ENCODE measurements at regions of chrX and their contacts with region 1.

Region 1: DNA sequence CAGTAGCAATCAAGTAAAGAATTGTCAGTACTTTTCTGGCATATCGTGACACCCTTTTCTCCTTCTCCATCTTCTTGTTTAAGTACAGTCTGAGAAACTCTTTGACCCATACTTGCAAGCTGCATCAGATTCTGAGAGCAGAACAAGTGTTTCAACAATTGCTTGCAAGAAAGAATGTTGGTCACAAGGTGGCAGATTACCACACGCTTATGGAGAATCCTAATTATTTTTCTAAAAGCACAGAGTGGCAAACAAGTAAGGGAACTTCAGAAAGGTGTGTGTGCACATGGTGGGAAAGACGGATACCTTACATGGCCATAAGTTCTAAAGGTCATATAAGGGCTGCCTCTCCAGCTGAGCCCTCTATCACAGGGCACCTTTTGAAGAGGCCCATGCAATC is 136.4 kb upstream of the FGF13 start:
- DNase-seq: peak; percentile 9
- H3K4me3 ChIP-seq: no peak overlapping the region
- H3K27ac ChIP-seq: no peak overlapping the region
- H3K4me1 ChIP-seq: no peaks in the 10 kb centered on the region
- H3K27me3 ChIP-seq: no peaks in the 10 kb centered on the region
- CTCF ChIP-seq: peak; percentile 17 to 49

Region 2: GRCh38 chrX:138886769-138887168 is 38.8 kb after region 1 on chrX:
- CTCF ChIA-PET with region 1: no interaction called
- dilution Hi-C with region 1: no loop called
- in situ Hi-C with region 1: no loop called
- intact Hi-C with region 1: no loop called
- DNase-seq: peak; percentile 73
- H3K4me3 ChIP-seq: no peak overlapping the region
- H3K27ac ChIP-seq: no peak overlapping the region
- H3K4me1 ChIP-seq: peaks cover 3% of the 10 kb centered on the region
- H3K27me3 ChIP-seq: no peaks in the 10 kb centered on the region
- CTCF ChIP-seq: no peak

Region 3: DNA sequence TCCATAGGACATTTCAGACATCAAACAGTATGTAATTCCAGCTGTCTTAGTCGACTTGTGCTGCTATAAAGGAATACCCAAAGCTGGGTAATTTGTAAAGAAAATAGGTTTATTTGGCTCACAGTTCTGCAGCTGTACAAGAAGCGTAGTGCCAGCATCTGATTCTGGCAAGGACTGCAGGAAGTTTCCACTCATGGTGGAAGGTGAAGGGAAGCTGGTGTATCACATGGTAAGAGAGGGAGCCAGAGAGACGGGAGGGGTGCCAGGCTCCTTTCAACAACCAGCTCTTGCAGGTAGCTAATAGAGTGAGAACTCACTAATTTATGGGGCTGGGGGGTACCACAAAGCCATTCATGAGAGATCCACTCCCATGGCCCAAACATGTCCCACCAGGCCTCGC is 116.6 kb after region 1 on chrX:
- CTCF ChIA-PET with region 1: no interaction called
- dilution Hi-C with region 1: no loop called
- in situ Hi-C with region 1: no loop called
- intact Hi-C with region 1: no loop called
- DNase-seq: no peak
- H3K4me3 ChIP-seq: no peak overlapping the region
- H3K27ac ChIP-seq: no peak overlapping the region
- H3K4me1 ChIP-seq: no peaks in the 10 kb centered on the region
- H3K27me3 ChIP-seq: peaks cover 3% of the 10 kb centered on the region
- CTCF ChIP-seq: no peak

Region 4: GRCh38 chrX:139429913-139430312 is 582.0 kb after region 1 on chrX:
- CTCF ChIA-PET with region 1: no interaction called
- dilution Hi-C with region 1: no loop called
- in situ Hi-C with region 1: no loop called
- intact Hi-C with region 1: loop called (anchors 5 kb)
- DNase-seq: peak; percentile 1
- H3K4me3 ChIP-seq: no peak overlapping the region
- H3K27ac ChIP-seq: no peak overlapping the region
- H3K4me1 ChIP-seq: no peaks in the 10 kb centered on the region
- H3K27me3 ChIP-seq: no peaks in the 10 kb centered on the region
- CTCF ChIP-seq: peak in 1 of 2 donors; percentile 28

Region 5: DNA sequence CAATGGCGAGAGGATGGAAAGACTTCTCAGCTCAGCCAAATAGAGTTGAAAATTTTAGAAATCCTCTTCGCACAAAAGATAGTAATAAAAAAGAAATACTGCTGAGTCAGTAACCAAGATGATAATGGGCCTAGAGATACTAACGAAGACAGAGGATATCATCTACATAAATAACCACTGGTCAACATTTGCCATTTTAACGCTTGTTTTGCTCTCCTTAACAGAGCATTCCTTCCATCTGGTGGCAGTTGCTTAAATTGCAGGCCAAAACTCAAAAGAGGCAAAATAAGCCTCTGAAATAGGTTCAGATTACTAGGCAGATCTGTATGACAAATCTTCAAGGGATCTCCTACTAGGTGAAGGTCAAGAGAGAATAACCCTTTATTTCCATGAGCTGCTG is 911.7 kb after region 1 on chrX:
- CTCF ChIA-PET with region 1: no interaction called
- dilution Hi-C with region 1: no loop called
- in situ Hi-C with region 1: no loop called
- intact Hi-C with region 1: loop called (anchors 2 kb)
- DNase-seq: peak; percentile 15
- H3K4me3 ChIP-seq: no peak overlapping the region
- H3K27ac ChIP-seq: no peak overlapping the region
- H3K4me1 ChIP-seq: peaks cover 7% of the 10 kb centered on the region
- H3K27me3 ChIP-seq: no peaks in the 10 kb centered on the region
- CTCF ChIP-seq: peak; percentile 37 to 48

Measured in mammary epithelial cell (primary cell).